Activated T-helper 1 cell treated with anti-CD3 and anti-CD28 coated beads, Interleukin-12 subunit alpha, Interleukin-12 subunit beta, Interleukin-2, Interleukin-4 antibody, amounts not matched to agents 30 ng/mL and 10 ng/mL and 1 ng/mL, durations not matched to agents 14 hours and 24 hours and 36 hours (primary cell): ENCODE measurements at regions of chr15 and their contacts with region 1.

Region 1: GRCh38 chr15:51239748-51240465 is 98.5 kb downstream of the CYP19A1 start:
- DNase-seq: no peak
- H3K4me3 Mint-ChIP-seq: no peak overlapping the region
- H3K27ac Mint-ChIP-seq: no peak overlapping the region
- H3K4me1 Mint-ChIP-seq: peaks cover 23% of the 10 kb centered on the region
- H3K27me3 Mint-ChIP-seq: peaks cover 18% of the 10 kb centered on the region

Region 2: GRCh38 chr15:50979041-50979440 is 260.9 kb before region 1 on chr15:
- intact Hi-C with region 1: no loop called
- DNase-seq: no peak
- H3K4me3 Mint-ChIP-seq: no peak overlapping the region
- H3K27ac Mint-ChIP-seq: no peak overlapping the region
- H3K4me1 Mint-ChIP-seq: peaks cover 6% of the 10 kb centered on the region
- H3K27me3 Mint-ChIP-seq: no peaks in the 10 kb centered on the region

Region 3: DNA sequence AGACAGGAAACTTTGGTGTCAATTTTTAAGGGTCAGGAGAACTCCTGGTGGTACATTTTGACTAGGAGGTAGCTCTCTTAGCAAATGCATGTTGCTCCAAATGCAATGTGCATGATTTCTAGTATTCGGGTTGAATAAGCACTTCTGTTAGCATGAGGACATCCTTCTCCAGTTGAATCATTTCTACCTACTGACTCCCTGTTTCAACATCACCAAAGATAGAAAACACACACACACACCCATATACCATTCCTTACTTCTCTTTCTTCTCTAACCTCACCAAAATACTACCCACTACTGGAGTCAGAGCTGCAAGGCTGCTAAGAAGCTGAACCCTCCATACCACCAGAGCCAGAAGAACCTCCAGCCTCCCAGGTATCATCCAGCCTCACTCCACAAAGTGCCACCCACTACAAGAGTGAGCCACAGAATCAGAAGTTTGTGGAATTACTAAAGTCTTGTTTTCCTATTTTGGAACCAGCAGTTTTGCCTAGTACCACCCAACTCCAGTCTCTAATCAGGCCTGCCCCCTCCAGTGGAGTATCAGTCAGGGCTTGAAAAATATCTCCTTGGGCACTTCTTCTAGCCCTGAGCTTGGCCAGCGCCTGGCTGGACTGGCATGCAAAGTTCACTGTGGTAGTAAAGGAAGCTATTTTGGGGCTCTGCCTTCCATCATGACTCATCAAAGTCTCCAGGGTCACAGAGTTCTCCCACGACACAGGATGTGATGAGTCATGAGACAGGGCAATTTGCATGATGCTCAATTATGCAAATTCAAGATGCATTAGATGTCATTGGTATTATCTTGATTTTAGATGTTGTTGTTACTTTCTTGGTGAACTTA is 11.7 kb before region 1 on chr15:
- intact Hi-C with region 1: loop called (anchors 1 kb)
- DNase-seq: peak; percentile 11
- H3K4me3 Mint-ChIP-seq: peak overlapping the region; percentile 8
- H3K27ac Mint-ChIP-seq: peak overlapping the region; percentile 81
- H3K4me1 Mint-ChIP-seq: peaks cover 26% of the 10 kb centered on the region
- H3K27me3 Mint-ChIP-seq: peaks cover 4% of the 10 kb centered on the region